ENCODE measurements at regions of chr11 and their contacts with region 1.

Region 1: DNA sequence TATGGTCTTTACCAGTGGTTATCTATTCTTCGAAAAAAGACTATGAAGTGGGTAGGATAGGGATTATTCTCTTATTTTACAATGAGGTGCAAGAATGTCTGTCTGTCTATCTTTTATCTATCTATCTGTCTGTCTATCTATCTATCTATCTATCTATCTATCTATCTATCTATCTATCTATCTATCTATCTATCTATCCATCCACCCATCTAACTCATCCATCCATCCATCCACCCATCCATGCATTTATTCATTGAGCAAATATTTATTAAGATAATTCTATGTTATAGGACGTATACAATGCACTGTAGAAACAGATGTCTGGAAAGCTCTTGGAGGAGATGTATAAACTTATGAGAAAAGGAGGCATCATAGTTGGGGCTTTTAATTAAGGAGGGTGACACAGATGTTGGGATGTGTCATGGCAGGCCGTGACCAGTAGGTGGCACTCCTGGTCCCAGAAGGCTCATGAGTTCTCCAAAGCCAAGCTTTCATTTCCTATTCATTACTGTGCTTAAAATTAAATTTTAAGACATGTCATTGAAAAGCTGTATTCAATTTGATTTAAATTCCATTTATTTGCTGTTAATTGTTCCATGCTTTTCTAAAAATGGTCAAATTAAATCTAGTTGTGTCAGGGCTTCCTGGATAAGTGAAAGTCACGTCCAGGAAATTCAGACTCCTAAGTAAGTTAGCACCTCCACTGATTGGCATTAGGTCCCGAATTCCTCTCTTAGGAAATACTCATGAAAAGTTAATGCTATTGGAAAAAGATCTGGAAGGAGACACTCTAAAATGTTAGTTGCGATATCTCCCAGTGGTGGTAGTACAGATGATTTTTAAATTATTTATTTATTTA is 19.0 kb upstream of the E2F8 start:
- DNase-seq: peak; percentile 40 to 62
- ATAC-seq: peak; percentile 73 to 92; a peak in 5 of 6 replicates
- H3K4me3 ChIP-seq: no peak overlapping the region
- H3K27ac ChIP-seq: no peak overlapping the region
- H3K4me1 ChIP-seq: no peaks in the 10 kb centered on the region
- CTCF ChIP-seq: peak; percentile 89
- EP300 ChIP-seq: no peak
- POLR2A ChIP-seq: no peak
- RAD21 ChIP-seq: peak; percentile 83

Region 2: DNA sequence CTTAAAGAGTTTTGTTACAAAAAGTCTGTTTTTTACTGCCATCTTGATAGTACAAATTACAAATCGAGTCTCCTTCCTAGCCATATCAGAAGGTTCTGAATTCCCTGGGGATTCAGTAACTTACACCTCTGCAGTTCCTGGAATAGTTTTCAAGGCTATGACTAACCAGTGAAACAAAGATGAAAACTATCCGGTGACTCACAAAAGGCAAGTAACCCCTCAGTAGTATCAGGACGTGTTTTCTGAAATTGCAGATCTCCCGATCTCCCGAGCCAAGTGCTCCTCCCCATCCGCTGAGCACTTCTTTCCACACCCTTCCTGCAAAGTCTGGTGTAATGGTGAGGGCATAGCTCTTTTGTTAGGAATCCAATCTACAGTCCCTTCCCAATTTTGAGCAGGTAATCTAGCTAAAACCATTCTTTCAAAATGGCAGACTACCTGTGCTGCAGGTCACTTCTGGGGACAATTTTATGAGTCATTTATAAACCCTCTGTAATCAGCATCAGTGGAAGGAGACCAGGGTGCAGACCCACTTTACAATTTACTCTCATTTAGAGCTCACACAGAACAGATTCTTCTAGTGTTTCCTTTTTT is 26.7 kb before region 1 on chr11:
- CTCF ChIA-PET with region 1: interaction called, 10 read pairs
- POLR2A ChIA-PET with region 1: no interaction called
- DNase-seq: peak; percentile 31 to 37
- ATAC-seq: peak; percentile 72 to 76; a peak in 5 of 6 replicates
- H3K4me3 ChIP-seq: no peak overlapping the region
- H3K27ac ChIP-seq: peak overlapping the region in 1 of 2 experiments; percentile 47; a peak in 1 of 6 replicates
- H3K4me1 ChIP-seq: peaks cover 12% of the 10 kb centered on the region; the same call in 1 of the 3 replicates
- CTCF ChIP-seq: no peak
- EP300 ChIP-seq: no peak
- POLR2A ChIP-seq: no peak
- RAD21 ChIP-seq: no peak

Region 3: DNA sequence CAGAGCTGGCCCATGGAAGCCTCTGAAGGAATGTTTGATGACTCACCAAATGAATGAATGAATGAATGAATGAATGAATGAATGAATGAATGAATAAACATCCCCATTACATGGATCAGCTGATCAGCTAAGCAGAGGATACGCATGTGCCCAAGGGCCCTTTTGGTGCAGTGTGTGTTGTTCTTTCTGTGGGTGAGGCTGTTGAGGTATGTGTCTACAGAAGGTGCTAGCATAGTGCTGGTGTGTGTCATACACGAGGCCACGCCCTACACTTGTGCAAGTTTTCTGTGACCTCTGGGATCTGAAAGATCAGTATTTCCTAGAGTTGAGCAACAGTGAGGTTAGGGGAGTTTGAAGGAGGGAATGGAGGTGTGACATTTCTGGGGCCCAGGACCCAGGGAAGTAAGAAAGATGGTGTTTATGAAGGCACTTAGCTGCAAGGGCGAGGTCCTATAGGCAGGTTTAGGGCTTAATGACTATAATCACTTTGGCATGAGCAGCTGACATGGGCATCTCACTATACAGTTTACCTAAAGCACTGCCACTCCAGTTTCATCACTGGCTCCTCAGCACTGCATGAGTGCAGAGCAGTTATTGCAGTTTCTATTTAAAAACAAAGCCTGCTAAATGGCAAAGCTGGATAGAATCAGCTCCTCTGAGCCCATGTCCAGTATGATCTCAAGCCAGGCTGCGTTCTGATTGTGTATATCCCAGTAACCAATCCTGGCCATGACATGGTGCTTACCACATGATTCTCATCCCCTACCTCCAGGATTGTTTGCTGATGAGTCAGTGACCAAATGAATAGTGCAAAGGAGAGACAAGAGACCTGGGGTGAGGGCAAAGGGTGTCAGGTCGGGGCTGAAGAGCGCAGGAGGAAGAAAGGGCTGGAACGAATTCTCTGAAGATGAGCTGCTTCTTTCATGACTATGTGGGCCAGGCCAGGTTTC is 17.4 kb after region 1 on chr11:
- CTCF ChIA-PET with region 1: interaction called, 26 read pairs
- POLR2A ChIA-PET with region 1: no interaction called
- DNase-seq: peak; percentile 49 to 67
- ATAC-seq: peak; percentile 80 to 84
- H3K4me3 ChIP-seq: no peak overlapping the region
- H3K27ac ChIP-seq: peak overlapping the region; percentile 48 to 69; a peak in 5 of 6 replicates
- H3K4me1 ChIP-seq: peaks cover 30% of the 10 kb centered on the region
- CTCF ChIP-seq: no peak
- EP300 ChIP-seq: no peak
- POLR2A ChIP-seq: no peak
- RAD21 ChIP-seq: no peak

Region 4: DNA sequence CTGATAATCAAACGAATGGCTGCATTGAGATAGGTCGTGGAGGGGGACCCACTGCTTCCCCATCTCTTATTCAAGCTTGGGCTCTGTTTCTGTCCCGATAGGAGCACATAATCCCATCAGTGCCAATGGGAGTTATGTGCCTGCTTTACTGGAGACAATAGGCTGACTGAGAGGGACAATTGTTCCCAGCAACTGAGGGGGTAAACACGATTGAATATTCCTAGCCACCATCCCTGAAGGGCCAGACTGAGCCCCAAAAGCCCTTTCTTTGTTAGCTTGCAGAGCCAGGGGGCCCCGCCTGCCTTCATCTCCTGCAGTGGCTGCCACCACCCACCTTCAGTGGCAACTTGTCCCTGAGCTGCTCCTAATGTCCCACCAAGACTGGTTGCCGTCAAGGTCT is 280.1 kb after region 1 on chr11:
- CTCF ChIA-PET with region 1: interaction called, 11 read pairs
- POLR2A ChIA-PET with region 1: no interaction called
- DNase-seq: no peak
- ATAC-seq: no peak
- H3K4me3 ChIP-seq: no peak overlapping the region
- H3K27ac ChIP-seq: no peak overlapping the region
- H3K4me1 ChIP-seq: no peaks in the 10 kb centered on the region
- CTCF ChIP-seq: no peak
- EP300 ChIP-seq: no peak
- POLR2A ChIP-seq: no peak
- RAD21 ChIP-seq: no peak

Measured in A549 (cell line).